ENCODE measurements at regions of chr5 and their contacts with region 1.

Region 1: GRCh38 chr5:79048437-79048836 is 21.0 kb downstream of the DMGDH start:
- DNase-seq: no peak
- H3K4me3 ChIP-seq: no peak overlapping the region
- H3K27me3 ChIP-seq: no peaks in the 10 kb centered on the region; the same call in 1 of the 2 replicates
- CTCF ChIP-seq: no peak

Region 2: DNA sequence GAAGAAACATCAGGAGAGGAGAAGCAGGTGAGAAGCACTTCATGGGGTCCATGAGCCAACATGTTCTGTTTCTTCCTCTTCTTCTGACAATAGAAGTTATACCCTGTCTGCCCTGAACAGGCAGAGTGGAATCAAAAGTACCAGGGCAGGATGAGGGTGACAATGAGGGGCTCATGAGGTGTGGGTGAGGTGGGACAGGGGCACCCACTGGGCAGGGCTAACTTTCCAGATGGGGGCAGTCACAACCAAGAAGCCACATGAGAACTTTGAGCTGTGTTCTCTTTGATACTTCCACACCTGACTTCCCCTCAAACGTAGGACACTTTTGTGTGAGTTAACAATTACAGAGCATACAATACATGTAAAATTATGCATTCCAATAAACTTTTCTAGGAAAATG is 492.6 kb before region 1 on chr5:
- CTCF ChIA-PET with region 1: no interaction called
- POLR2A ChIA-PET with region 1: no interaction called
- DNase-seq: no peak
- H3K4me3 ChIP-seq: no peak overlapping the region
- H3K27me3 ChIP-seq: no peaks in the 10 kb centered on the region
- CTCF ChIP-seq: no peak

Region 3: GRCh38 chr5:79030663-79031484 is 17.6 kb before region 1 on chr5:
- CTCF ChIA-PET with region 1: no interaction called
- POLR2A ChIA-PET with region 1: no interaction called
- DNase-seq: no peak
- H3K4me3 ChIP-seq: no peak overlapping the region
- H3K27me3 ChIP-seq: no peaks in the 10 kb centered on the region
- CTCF ChIP-seq: no peak

Region 4: GRCh38 chr5:79059674-79060073 is 11.2 kb after region 1 on chr5:
- CTCF ChIA-PET with region 1: interaction called, 10 read pairs
- POLR2A ChIA-PET with region 1: no interaction called
- DNase-seq: no peak
- H3K4me3 ChIP-seq: no peak overlapping the region
- H3K27me3 ChIP-seq: no peaks in the 10 kb centered on the region; the same call in 1 of the 2 replicates
- CTCF ChIP-seq: no peak

Region 5: GRCh38 chr5:79173626-79174025 is 125.2 kb after region 1 on chr5:
- CTCF ChIA-PET with region 1: no interaction called
- POLR2A ChIA-PET with region 1: no interaction called
- DNase-seq: no peak
- H3K4me3 ChIP-seq: no peak overlapping the region
- H3K27me3 ChIP-seq: no peaks in the 10 kb centered on the region
- CTCF ChIP-seq: no peak

Region 6: DNA sequence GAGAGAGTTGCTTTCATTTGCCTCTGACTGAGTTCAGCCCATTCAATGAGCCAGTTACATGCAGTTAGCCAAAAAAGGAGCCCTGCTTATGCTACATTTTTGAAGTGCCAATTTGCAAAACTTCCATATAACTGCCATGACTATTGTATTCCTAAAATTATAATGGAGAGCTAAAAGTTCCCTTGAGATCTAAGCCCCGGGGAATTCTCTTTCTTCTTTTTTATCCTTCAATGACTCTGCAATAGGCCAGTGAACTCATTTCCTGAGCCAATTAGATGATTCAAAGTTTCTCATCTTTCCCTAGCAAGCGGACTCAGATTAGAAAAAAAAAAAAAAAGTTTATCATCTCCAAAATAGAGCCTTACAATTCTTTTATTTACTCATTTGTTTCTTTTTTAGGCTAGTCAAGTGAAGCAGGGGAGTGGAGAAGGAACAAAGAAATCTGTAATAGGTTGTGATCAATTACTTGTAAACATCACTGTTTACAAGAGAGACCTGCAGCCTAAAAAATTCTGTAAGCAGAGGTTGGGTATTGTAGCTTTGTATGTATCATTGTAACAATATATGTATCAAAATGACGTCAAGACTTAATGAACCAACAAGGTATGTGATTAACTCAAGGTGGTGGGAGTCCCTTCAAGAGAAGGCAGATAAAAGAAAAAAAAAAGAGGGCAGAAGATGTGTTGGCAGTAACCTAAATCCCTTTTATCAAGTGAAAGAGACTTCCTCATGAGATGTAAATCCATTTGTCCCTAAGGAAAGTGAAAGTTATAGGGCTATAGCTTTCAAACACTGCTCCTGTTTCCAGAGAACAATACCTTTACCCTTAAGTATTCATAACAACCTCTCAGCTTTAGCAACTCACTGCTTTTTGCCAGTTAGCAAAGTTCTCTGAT is 514.2 kb after region 1 on chr5:
- CTCF ChIA-PET with region 1: no interaction called
- POLR2A ChIA-PET with region 1: no interaction called
- DNase-seq: no peak
- H3K4me3 ChIP-seq: no peak overlapping the region
- H3K27me3 ChIP-seq: no peaks in the 10 kb centered on the region
- CTCF ChIP-seq: no peak